ENCODE measurements at regions of chr3 and their contacts with region 1.

Region 1: DNA sequence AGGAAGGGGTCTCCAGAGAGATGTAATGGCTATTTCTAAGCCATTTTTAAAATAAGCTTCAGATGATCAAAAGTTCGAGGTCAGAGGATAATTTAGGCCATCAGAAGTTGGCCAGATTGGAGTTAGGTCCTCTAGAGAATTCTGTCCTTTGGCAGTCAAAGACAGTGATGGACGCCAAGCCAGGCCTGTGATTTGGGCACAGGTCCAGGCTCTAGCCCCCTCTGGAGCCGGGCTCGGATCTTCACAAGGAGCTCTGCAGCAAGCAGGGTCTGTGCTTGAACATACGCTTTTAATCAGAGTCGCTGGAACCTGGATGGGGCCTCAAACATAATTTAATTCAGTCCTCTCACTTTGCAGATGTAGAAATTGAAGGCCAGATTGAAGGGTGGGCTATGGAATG is 151.4 kb upstream of the BCL6 start:
- DNase-seq: no peak
- ATAC-seq: no peak
- H3K4me3 Mint-ChIP-seq: no peak overlapping the region
- H3K27ac Mint-ChIP-seq: no peak overlapping the region
- H3K4me1 Mint-ChIP-seq: peaks cover 4% of the 10 kb centered on the region
- H3K27me3 Mint-ChIP-seq: peaks cover 20% of the 10 kb centered on the region
- CTCF ChIP-seq: no peak

Region 2: DNA sequence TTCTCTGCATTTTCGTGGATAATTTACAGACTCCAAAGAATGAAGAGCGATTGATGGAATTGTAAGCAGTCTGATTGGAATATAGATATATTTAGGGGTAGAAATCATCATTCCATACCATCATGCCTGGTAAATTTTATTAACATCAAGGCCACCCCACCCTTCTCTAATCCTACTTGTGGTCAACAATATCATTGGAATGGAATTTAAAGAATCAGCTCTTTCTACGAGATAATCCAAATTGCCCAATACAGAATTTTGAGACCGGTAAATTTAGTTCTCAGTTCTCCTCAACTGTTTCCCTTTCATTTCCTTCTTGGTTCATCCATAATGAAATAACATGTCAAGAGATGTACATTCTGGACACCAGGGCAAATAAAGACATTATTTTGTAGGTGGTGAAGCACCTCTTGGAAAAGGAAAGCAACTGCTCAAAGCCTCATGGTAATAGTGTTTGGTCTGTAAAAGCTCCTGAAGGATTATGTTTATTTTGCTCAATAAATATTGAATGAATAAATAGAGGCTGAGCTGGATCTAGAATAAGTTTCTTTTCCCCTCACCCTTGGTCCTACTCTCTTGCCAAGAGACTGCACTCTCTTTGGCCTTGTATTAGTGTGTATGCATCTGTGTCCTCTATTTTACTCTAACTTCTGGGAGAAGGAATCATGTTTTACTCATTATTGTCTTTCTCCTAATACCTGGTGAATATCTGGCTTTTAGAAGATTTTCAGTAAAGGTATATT is 17.7 kb before region 1 on chr3:
- CTCF ChIA-PET with region 1: no interaction called
- POLR2A ChIA-PET with region 1: interaction called, 10 read pairs
- intact Hi-C with region 1: no loop called
- DNase-seq: no peak
- ATAC-seq: no peak
- H3K4me3 Mint-ChIP-seq: no peak overlapping the region
- H3K27ac Mint-ChIP-seq: no peak overlapping the region
- H3K4me1 Mint-ChIP-seq: no peaks in the 10 kb centered on the region
- H3K27me3 Mint-ChIP-seq: peaks cover 4% of the 10 kb centered on the region
- CTCF ChIP-seq: no peak